ENCODE measurements at regions of chr17 and their contacts with region 1.

Region 1: GRCh38 chr17:56292010-56292409 is 138.7 kb downstream of the ANKFN1 start:
- DNase-seq: peak; percentile 26
- H3K4me3 ChIP-seq: no peak overlapping the region
- H3K27ac ChIP-seq: no peak overlapping the region
- H3K4me1 ChIP-seq: peaks cover 0 to 20% (median 7%) of the 10 kb centered on the region in 4 donors
- H3K27me3 ChIP-seq: no peaks in the 10 kb centered on the region
- CTCF ChIP-seq: no peak
- EP300 ChIP-seq: no peak
- POLR2A ChIP-seq: no peak

Region 2: GRCh38 chr17:55852734-55853133 is 439.3 kb before region 1 on chr17:
- intact Hi-C with region 1: loop called (anchors 5 kb)
- DNase-seq: no peak
- H3K4me3 ChIP-seq: no peak overlapping the region
- H3K27ac ChIP-seq: no peak overlapping the region
- H3K4me1 ChIP-seq: no peaks in the 10 kb centered on the region
- H3K27me3 ChIP-seq: no peaks in the 10 kb centered on the region
- CTCF ChIP-seq: no peak
- EP300 ChIP-seq: no peak
- POLR2A ChIP-seq: no peak